ENCODE measurements at regions of chrX and their contacts with region 1.

Region 1: DNA sequence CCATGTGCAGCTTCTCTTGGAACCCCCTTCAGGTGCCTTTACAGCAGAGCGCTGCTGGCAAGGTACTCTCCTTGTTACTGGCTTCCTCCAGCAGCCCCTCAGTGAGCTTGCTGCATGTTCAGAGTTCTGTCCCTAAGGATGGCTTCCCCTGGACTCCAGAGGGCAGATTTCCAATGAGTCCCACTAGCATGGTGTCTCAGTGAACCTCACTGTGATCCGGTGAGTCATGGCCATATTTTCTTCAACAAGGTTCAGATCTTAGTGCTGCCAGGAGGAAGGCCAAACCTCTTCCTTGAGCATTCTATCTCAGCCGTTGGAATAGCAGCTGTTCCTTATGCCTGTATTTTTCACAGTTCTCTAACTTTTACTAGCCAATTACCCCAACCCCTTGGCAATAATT is 98.8 kb downstream of the CASK start:
- DNase-seq: peak; percentile 22
- H3K4me3 Mint-ChIP-seq: peak overlapping the region; percentile 21
- H3K27ac Mint-ChIP-seq: peak overlapping the region; percentile 79
- H3K4me1 Mint-ChIP-seq: peaks cover 42% of the 10 kb centered on the region
- H3K27me3 Mint-ChIP-seq: no peaks in the 10 kb centered on the region
- CTCF ChIP-seq: no peak

Region 2: GRCh38 chrX:41468647-41469323 is 355.8 kb before region 1 on chrX:
- CTCF ChIA-PET with region 1: no interaction called
- intact Hi-C with region 1: no loop called
- DNase-seq: no peak
- H3K4me3 Mint-ChIP-seq: no peak overlapping the region
- H3K27ac Mint-ChIP-seq: no peak overlapping the region
- H3K4me1 Mint-ChIP-seq: no peaks in the 10 kb centered on the region
- H3K27me3 Mint-ChIP-seq: no peaks in the 10 kb centered on the region
- CTCF ChIP-seq: no peak

Region 3: GRCh38 chrX:41870719-41871151 is 46.2 kb after region 1 on chrX:
- CTCF ChIA-PET with region 1: no interaction called
- intact Hi-C with region 1: loop called (anchors 5 kb)
- DNase-seq: peak; percentile 49
- H3K4me3 Mint-ChIP-seq: no peak overlapping the region
- H3K27ac Mint-ChIP-seq: peak overlapping the region; percentile 67
- H3K4me1 Mint-ChIP-seq: peaks cover 59% of the 10 kb centered on the region
- H3K27me3 Mint-ChIP-seq: no peaks in the 10 kb centered on the region
- CTCF ChIP-seq: no peak

Region 4: DNA sequence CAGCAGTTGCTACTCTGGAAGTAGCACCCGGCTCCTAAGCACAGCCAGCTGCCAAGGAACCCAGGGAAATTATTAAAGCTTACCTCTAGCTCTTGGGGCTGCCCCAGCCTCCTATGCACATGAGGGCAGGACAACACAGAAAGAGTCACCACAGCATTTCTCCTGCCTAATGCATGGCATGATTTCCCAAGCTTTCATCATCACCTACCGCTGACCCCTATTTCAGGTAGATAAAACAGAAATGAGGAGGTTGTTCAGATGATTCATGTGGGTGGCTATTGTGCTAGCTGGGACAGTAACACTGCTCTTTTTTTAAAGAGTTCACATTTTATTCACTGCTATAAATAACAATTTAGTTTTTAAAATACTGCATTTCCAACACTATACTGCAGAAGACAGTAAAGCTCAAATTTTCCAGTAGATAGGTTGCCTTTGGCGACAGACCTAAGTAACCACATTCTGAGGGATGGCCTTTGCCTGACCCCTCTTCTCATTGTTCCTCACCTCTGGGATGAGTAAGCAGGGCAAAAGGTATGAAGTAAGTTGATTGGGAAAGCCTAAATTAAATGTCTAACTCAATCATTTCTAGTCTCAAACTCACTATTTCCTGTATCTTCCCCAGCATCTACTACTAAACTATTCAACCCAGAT is 82.1 kb after region 1 on chrX:
- CTCF ChIA-PET with region 1: no interaction called
- intact Hi-C with region 1: loop called (anchors 5 kb)
- DNase-seq: no peak
- H3K4me3 Mint-ChIP-seq: peak overlapping the region; percentile 14
- H3K27ac Mint-ChIP-seq: peak overlapping the region; percentile 84
- H3K4me1 Mint-ChIP-seq: peaks cover 50% of the 10 kb centered on the region
- H3K27me3 Mint-ChIP-seq: no peaks in the 10 kb centered on the region
- CTCF ChIP-seq: no peak

Region 5: GRCh38 chrX:42422961-42423360 is 598.4 kb after region 1 on chrX:
- CTCF ChIA-PET with region 1: no interaction called
- intact Hi-C with region 1: no loop called
- DNase-seq: no peak
- H3K4me3 Mint-ChIP-seq: no peak overlapping the region
- H3K27ac Mint-ChIP-seq: no peak overlapping the region
- H3K4me1 Mint-ChIP-seq: no peaks in the 10 kb centered on the region
- H3K27me3 Mint-ChIP-seq: no peaks in the 10 kb centered on the region
- CTCF ChIP-seq: no peak